CD4-positive, alpha-beta T cell (primary cell): ENCODE measurements at regions of chr12 and their contacts with region 1.

Region 1: GRCh38 chr12:94139816-94140215 is 8.6 kb upstream of the PLXNC1 start:
- DNase-seq: no peak
- ATAC-seq: no peak
- H3K4me3 ChIP-seq: no peak overlapping the region
- H3K4me3 Mint-ChIP-seq: no peak overlapping the region
- H3K27ac ChIP-seq: no peak overlapping the region
- H3K27ac Mint-ChIP-seq: no peak overlapping the region
- H3K4me1 ChIP-seq: no peaks in the 10 kb centered on the region
- H3K4me1 Mint-ChIP-seq: no peaks in the 10 kb centered on the region
- H3K27me3 ChIP-seq: no peaks in the 10 kb centered on the region
- H3K27me3 Mint-ChIP-seq: no peaks in the 10 kb centered on the region
- CTCF ChIP-seq: no peak

Region 2: DNA sequence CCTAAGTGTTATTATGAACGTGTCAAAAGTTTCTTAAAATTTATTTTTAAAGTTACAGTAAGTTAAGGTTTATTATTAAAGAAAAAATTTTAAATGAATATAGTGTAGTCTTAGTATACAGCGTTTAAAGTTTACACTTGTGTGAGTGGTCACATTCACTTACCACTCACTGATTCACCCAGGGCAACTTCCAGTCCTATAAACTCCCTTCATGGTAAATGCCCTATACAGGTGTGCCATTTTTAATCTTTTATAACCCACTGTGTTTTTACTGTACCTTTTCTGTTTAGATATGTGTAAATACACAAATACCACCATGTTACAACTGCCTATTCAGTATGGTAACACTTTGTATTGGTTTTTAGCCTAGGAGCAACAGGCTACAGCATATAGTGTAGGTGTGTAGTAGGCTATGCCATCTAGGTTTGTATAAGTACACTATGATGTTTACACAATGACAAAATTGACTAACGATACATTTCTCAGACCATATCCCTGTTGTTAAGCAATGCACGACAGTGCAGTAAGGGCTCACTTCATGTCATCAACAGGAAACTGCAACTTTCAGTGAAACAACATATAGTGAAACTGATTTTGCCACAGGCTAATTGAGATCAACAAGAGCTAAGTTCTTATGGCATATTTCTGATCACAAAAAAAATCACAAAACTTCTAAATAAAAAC is 622.6 kb after region 1 on chr12:
- CTCF ChIA-PET with region 1: no interaction called
- POLR2A ChIA-PET with region 1: no interaction called
- intact Hi-C with region 1: loop called in 1 of 2 experiments (anchors 5 kb)
- DNase-seq: peak in 1 of 14 experiments; percentile 6
- ATAC-seq: no peak
- H3K4me3 ChIP-seq: no peak overlapping the region
- H3K4me3 Mint-ChIP-seq: no peak overlapping the region
- H3K27ac ChIP-seq: no peak overlapping the region
- H3K27ac Mint-ChIP-seq: no peak overlapping the region
- H3K4me1 ChIP-seq: no peaks in the 10 kb centered on the region
- H3K4me1 Mint-ChIP-seq: no peaks in the 10 kb centered on the region
- H3K27me3 ChIP-seq: no peaks in the 10 kb centered on the region
- H3K27me3 Mint-ChIP-seq: peaks cover 13% of the 10 kb centered on the region
- CTCF ChIP-seq: no peak